ENCODE measurements at regions of chr2 and their contacts with region 1.

Region 1: DNA sequence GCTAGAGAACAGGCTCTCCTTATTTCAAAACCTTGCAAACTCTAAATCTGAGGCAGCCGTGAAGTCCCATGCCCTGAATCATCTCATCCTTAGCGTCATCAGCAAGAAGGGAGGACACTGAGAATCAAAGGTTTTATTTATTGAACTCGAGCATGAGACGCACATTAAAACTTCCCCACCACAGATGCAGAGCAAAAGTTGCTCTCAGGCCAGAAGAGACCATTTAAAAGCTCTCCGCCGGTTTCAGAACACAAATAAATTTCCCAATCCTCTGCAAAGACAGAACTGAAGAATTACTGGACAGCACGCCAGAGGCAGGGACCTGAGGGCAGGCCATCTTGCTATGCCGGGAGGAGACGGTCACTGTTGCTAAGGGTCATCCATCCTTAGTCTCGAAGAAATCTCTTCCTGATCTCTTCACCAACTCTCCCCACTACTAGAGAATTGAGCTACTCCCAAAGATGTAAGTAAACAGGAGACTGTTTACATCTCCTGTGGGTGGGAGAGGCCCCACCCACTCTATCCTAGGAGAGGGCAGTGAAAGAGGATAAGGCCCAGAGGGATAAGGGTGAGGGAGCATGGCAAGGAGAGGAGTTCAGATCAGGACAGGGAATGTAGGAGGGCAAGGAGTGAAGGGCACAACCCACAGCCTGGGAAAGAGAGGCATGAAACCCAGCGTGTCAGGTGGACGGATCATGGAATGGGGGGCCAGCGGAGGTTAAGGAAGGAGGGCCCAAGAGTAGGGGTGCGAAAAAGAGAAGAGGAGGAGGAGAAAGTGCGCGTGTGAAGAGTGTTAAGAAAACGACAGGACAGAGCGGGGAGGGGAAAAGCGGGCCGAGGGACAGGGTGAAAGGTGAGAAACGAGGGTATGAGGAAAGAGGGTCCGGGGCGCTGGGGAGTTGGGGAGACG is 1.1 kb downstream of the AMMECR1L start:
- DNase-seq: peak; percentile 59
- H3K4me3 ChIP-seq: peak overlapping the region; percentile 53 to 66 (median 64)
- H3K27ac ChIP-seq: peak overlapping the region; percentile 67
- H3K4me1 ChIP-seq: peaks cover 20% of the 10 kb centered on the region
- H3K27me3 ChIP-seq: no peaks in the 10 kb centered on the region
- CTCF ChIP-seq: no peak

Region 2: GRCh38 chr2:127695491-127696472 is 188.9 kb before region 1 on chr2:
- CTCF ChIA-PET with region 1: no interaction called
- dilution Hi-C with region 1: no loop called
- in situ Hi-C with region 1: no loop called
- intact Hi-C with region 1: no loop called
- DNase-seq: peak; percentile 30
- H3K4me3 ChIP-seq: no peak overlapping the region
- H3K27ac ChIP-seq: no peak overlapping the region
- H3K4me1 ChIP-seq: peaks cover 11% of the 10 kb centered on the region
- H3K27me3 ChIP-seq: no peaks in the 10 kb centered on the region
- CTCF ChIP-seq: peak in 1 of 2 donors; percentile 27

Region 3: GRCh38 chr2:127917916-127918315 is 33.2 kb after region 1 on chr2:
- CTCF ChIA-PET with region 1: no interaction called
- dilution Hi-C with region 1: loop called (anchors 5 kb)
- in situ Hi-C with region 1: no loop called
- intact Hi-C with region 1: no loop called
- DNase-seq: no peak
- H3K4me3 ChIP-seq: no peak overlapping the region
- H3K27ac ChIP-seq: no peak overlapping the region
- H3K4me1 ChIP-seq: no peaks in the 10 kb centered on the region
- H3K27me3 ChIP-seq: no peaks in the 10 kb centered on the region
- CTCF ChIP-seq: no peak

Region 4: DNA sequence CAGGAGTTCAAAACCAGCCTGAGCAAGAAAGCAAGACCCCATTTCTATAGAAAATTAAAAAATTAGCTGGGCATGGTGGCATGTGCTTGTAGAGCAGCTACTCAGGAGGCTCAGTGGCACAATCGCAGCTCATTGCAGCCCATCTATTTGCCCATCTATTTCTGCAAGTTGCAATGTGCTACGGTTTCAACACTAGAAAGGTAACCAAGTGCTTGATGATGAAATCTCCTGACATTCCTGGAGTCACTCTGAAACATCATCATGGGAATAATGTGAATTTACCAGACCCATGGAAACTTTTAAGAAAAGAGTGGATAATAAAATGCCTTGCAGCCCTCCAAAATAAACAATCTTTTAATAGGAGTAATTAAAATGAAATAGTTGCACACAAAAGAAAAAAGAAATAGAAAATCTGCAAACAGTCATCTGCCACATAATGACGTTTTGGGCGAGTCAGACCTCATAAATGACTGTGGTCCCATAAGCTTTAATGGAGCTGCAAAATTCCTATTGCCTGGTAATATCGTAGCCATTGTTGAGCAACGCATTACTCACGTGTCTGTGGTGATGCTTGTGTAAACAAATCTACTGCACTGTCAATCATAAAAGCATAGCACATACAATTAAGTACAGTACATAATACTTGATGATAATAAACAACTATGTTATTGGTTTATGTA is 47.6 kb after region 1 on chr2:
- CTCF ChIA-PET with region 1: no interaction called
- dilution Hi-C with region 1: no loop called
- in situ Hi-C with region 1: no loop called
- intact Hi-C with region 1: loop called (anchors 5 kb)
- DNase-seq: peak; percentile 90
- H3K4me3 ChIP-seq: no peak overlapping the region
- H3K27ac ChIP-seq: no peak overlapping the region
- H3K4me1 ChIP-seq: peaks cover 7% of the 10 kb centered on the region
- H3K27me3 ChIP-seq: no peaks in the 10 kb centered on the region
- CTCF ChIP-seq: no peak